PC-9 (cell line): ENCODE measurements at regions of chr11 and their contacts with region 1.

Region 1: DNA sequence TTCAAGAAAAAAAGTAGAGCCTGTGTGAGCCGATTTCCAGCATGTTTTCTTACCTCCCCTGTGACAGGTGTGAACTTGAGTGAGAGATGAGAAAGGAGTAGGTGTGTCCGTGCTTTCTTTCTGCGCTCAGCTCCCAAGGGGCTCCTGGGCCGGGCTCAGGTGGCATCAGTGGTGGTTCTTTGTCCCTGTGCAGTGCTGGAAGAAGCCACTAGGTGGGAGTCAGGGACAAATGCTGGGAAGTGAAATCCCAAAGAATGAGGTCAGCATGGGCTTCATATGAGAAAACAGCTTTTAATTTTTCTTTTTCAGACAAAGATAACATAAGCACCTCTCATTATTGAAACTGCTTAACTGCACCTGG is 57.8 kb downstream of the PPFIBP2 start:
- DNase-seq: peak; percentile 61 to 74
- H3K4me3 ChIP-seq: no peak overlapping the region
- H3K27ac ChIP-seq: peak overlapping the region; percentile 71
- H3K4me1 ChIP-seq: peaks cover 54% of the 10 kb centered on the region
- H3K27me3 ChIP-seq: no peaks in the 10 kb centered on the region
- CTCF ChIP-seq: peak; percentile 89

Region 2: GRCh38 chr11:7513234-7514098 is 58.2 kb before region 1 on chr11 and contains the start of gene PPFIBP2:
- CTCF ChIA-PET with region 1: no interaction called
- POLR2A ChIA-PET with region 1: no interaction called
- intact Hi-C with region 1: loop called (anchors 1 kb)
- DNase-seq: peak; percentile 51 to 70
- H3K4me3 ChIP-seq: peak within 1 kb of the TSS; percentile 77
- H3K27ac ChIP-seq: no peak within 1 kb of the TSS
- H3K4me1 ChIP-seq: no peaks in the 10 kb centered on the region
- H3K27me3 ChIP-seq: no peaks in the 10 kb centered on the region
- CTCF ChIP-seq: peak; percentile 80
- total RNA-seq, gene PPFIBP2: 13.6 and 13.9 TPM in 2 replicates

Region 3: GRCh38 chr11:7555052-7555699 is 16.4 kb before region 1 on chr11:
- CTCF ChIA-PET with region 1: no interaction called
- POLR2A ChIA-PET with region 1: no interaction called
- intact Hi-C with region 1: no loop called
- DNase-seq: no peak
- H3K4me3 ChIP-seq: no peak overlapping the region
- H3K27ac ChIP-seq: no peak overlapping the region
- H3K4me1 ChIP-seq: peaks cover 11% of the 10 kb centered on the region
- H3K27me3 ChIP-seq: no peaks in the 10 kb centered on the region
- CTCF ChIP-seq: no peak

Region 4: DNA sequence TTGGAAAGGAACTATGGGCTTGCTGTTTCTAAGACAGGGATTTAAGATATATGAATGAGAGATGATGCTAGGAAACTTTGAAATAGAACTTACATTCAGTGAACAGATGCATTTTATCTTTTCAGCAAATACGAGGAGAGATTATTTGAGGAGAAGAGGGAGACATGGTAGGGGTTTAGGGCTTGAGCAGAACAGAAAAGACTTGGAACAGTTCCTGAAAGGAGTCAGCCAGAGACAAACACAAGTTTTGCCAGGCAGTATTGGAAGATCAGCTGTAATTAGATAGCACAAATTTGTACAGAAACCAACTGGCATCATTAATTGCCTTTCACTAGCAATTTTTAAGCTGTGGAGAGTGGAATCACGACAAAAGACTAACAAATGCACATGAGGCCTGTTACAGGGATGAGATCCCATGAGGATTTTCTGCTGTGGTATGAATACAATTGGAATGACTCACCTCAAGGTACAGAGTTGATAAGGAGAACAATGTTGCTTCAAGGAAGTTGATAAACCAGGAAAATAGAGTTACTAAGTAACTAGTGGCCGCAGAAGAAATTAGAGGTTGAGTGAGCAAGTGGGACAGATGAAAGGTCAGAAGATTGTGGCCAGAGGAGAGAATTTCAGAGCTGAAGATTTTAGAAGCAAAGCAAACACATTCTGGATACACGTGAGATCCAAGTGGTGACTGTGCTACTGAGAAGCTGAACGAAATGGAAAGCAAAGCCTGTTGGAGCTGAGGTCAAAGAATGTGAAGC is 33.7 kb after region 1 on chr11:
- CTCF ChIA-PET with region 1: interaction called, 5 read pairs
- POLR2A ChIA-PET with region 1: interaction called, 3 read pairs
- intact Hi-C with region 1: loop called (anchors 1 kb)
- DNase-seq: peak; percentile 53 to 98
- H3K4me3 ChIP-seq: peak overlapping the region; percentile 25; the same call in 1 of the 2 replicates
- H3K27ac ChIP-seq: peak overlapping the region; percentile 94
- H3K4me1 ChIP-seq: peaks cover 62% of the 10 kb centered on the region
- H3K27me3 ChIP-seq: no peaks in the 10 kb centered on the region
- CTCF ChIP-seq: no peak

Region 5: DNA sequence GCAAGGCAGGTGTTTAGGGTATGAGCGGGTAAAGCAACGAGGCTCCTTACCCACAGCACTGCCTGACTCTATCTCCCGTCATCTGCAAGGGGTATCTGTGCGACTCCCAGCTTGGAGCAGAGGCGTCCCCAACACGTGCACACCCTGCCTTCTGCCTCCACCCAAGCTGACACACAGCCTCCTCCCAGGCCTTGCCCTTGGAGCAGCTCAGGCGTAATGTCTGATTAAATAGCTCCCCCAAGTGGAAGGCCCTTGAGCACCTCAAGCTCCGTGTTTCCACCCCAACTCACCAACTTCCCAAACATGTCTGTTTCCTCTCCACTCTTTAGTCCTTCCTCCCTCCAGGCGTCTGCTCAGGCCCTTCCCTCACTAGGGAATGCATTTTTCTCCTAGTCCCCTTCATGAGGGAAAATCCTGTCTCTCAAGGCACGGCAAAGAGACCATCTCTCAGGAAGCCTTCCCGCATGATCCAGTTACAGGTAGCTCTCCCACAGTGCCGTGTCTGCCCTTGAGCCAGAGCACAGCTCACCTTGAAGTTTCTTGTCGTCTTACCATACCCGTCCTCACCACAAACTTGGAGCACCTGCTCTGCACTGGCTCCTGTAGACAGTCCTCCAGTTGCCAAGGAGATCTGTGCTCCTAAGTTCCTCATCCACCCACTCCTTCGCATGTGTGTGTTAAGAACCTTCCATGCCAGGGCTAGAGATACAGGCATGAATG is 85.8 kb after region 1 on chr11:
- CTCF ChIA-PET with region 1: interaction called, 20 read pairs
- POLR2A ChIA-PET with region 1: no interaction called
- intact Hi-C with region 1: loop called (anchors 1 kb)
- DNase-seq: peak; percentile 31 to 53
- H3K4me3 ChIP-seq: no peak overlapping the region
- H3K27ac ChIP-seq: no peak overlapping the region
- H3K4me1 ChIP-seq: no peaks in the 10 kb centered on the region
- H3K27me3 ChIP-seq: no peaks in the 10 kb centered on the region
- CTCF ChIP-seq: peak; percentile 65

Region 6: GRCh38 chr11:7665473-7666291 is 94.1 kb after region 1 on chr11:
- CTCF ChIA-PET with region 1: interaction called, 5 read pairs
- POLR2A ChIA-PET with region 1: no interaction called
- intact Hi-C with region 1: loop called (anchors 2 kb)
- DNase-seq: peak; percentile 42 to 60
- H3K4me3 ChIP-seq: no peak overlapping the region
- H3K27ac ChIP-seq: no peak overlapping the region
- H3K4me1 ChIP-seq: no peaks in the 10 kb centered on the region
- H3K27me3 ChIP-seq: no peaks in the 10 kb centered on the region
- CTCF ChIP-seq: peak; percentile 85

Region 7: DNA sequence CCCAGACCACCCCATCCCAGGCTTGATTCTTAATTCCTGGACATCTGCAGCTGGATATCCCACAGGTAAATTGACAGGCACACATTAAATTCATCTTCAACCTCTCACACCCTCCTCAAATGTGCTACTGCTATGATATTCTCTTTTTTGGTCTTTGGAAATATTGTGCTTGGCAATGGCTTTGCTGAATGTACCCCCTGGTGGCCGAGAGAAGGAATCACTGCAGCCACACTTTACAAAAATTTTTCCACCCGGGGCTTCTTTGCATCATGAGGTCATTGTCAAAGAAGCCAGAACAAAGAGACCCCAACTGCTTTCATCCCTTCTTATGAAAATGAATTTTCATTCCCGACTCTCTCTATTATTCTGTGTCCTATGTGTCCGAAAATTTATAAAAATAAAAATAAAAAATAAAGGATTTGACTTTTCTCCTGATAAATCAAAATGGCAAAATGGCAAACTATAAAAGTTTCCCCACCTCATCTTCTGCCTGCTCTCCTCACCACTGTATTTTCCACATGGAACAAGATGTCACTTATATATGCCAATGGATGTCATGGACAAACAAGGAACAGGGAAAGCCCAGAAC is 116.7 kb after region 1 on chr11:
- CTCF ChIA-PET with region 1: no interaction called
- POLR2A ChIA-PET with region 1: no interaction called
- intact Hi-C with region 1: loop called (anchors 1 kb)
- DNase-seq: no peak
- H3K4me3 ChIP-seq: no peak overlapping the region
- H3K27ac ChIP-seq: no peak overlapping the region
- H3K4me1 ChIP-seq: no peaks in the 10 kb centered on the region
- H3K27me3 ChIP-seq: no peaks in the 10 kb centered on the region
- CTCF ChIP-seq: peak; percentile 76

Region 8: GRCh38 chr11:7714786-7715185 is 143.2 kb after region 1 on chr11:
- CTCF ChIA-PET with region 1: no interaction called
- POLR2A ChIA-PET with region 1: no interaction called
- intact Hi-C with region 1: no loop called
- DNase-seq: no peak
- H3K4me3 ChIP-seq: no peak overlapping the region
- H3K27ac ChIP-seq: no peak overlapping the region
- H3K4me1 ChIP-seq: no peaks in the 10 kb centered on the region
- H3K27me3 ChIP-seq: no peaks in the 10 kb centered on the region
- CTCF ChIP-seq: no peak